Ascending aorta (tissue), 2 donors: ENCODE measurements at regions of chr3 and their contacts with region 1.

Region 1: GRCh38 chr3:123723522-123724168 is 138.8 kb upstream of the HACD2 start:
- DNase-seq: peak in 1 of 2 donors; percentile 75
- H3K4me3 ChIP-seq: no peak overlapping the region
- H3K27ac ChIP-seq: peak overlapping the region; percentile 34 to 56
- H3K4me1 ChIP-seq: peaks cover 11 to 46% of the 10 kb centered on the region in 2 donors
- H3K27me3 ChIP-seq: no peaks in the 10 kb centered on the region
- CTCF ChIP-seq: peak; percentile 77 to 82 (median 81)

Region 2: DNA sequence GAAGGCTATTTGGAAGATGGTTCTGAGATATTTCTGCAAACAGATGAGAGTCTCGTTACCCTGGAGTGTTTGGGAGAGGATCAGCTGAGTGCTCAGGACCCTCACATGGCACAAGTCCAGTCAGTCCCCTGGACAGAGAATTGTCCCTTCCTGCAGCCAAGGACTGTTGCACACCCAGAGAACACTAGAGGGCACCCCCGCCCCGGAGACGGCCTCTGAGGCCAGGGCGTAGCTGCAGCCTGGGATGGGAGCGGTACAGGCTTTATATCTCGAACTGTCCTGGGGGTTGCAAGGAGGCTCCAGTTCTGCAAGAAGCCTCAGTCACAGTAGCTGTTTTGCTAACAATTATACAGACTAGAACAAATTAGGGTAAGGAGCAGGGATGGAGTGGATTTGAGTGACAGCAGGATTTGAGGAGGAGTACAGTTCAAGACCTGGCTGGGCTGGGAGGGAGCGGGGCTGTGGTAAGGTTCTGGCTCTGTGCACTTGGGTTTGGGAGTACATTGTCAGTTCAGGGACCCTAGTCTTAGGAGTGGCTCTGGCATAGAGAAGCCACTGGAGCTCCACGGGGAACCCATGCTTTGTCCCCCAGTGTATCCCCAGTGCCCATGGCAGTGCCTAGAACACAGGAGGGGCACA is 71.2 kb before region 1 on chr3:
- intact Hi-C with region 1: loop called (anchors 1 kb)
- DNase-seq: peak in 1 of 2 donors; percentile 87
- H3K4me3 ChIP-seq: no peak overlapping the region
- H3K27ac ChIP-seq: peak overlapping the region; percentile 85 to 96
- H3K4me1 ChIP-seq: peaks cover 18 to 54% of the 10 kb centered on the region in 2 donors
- H3K27me3 ChIP-seq: no peaks in the 10 kb centered on the region
- CTCF ChIP-seq: peak; percentile 81 to 93 (median 89)

Region 3: DNA sequence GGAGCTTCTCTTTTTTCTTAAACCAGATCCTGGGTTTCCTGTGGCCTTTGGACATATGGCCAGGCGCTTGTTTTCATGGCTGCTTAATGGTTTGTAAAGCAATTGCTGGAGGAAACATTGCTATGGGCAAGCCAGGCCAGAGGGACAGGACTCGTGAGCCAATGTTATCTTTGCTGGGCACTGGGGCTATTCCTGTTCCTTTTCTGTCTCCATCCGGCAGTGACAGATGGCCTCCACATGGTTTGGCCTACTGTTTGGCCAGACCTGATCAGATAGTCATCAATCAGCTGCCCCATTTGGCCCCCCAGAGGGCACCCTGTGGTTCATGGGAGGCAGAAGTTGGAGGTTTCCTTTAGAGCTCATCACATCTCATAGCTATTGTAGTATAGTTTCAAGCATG is 594.4 kb after region 1 on chr3:
- intact Hi-C with region 1: no loop called
- DNase-seq: no peak
- H3K4me3 ChIP-seq: no peak overlapping the region
- H3K27ac ChIP-seq: peak overlapping the region; percentile 55 to 67
- H3K4me1 ChIP-seq: peaks cover 0 to 28% of the 10 kb centered on the region in 2 donors
- H3K27me3 ChIP-seq: no peaks in the 10 kb centered on the region
- CTCF ChIP-seq: no peak